ENCODE measurements at regions of chr15 and their contacts with region 1.

Region 1: DNA sequence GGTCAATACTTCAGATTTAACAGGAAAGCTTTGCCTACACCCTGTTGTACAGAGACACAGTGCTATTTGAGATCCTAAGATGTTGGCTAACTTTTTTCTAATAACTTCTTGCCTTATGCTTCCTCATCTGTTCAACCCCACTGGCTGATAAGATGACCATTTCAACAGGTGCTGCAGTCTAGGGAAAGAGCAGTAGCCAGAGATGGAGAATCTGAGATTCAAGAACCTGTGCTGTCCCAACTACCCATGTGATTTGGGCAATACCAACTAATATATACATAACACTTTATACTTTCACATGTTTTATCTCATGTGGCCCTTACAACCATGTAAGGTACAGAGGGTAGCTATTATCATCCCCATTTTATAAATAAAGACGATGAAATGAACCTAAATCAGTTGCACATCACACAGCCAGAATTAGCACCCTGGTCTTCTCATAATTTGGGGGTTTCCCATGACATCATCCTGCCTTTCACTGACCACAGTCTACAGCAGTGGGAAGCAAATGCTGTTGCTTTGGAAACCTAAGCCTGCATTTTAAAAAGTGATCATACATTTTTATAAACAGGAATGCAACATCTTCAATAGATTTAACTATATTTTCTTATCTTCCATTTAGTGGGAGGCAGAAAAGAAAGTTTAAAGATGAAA is 9.7 kb downstream of the TTC23 start:
- DNase-seq: no peak
- ATAC-seq: no peak
- H3K4me3 ChIP-seq: no peak overlapping the region
- H3K27ac ChIP-seq: no peak overlapping the region
- H3K4me1 ChIP-seq: no peaks in the 10 kb centered on the region
- H3K27me3 ChIP-seq: no peaks in the 10 kb centered on the region
- CTCF ChIP-seq: no peak
- EP300 ChIP-seq: no peak
- POLR2A ChIP-seq: no peak
- RAD21 ChIP-seq: no peak

Region 2: DNA sequence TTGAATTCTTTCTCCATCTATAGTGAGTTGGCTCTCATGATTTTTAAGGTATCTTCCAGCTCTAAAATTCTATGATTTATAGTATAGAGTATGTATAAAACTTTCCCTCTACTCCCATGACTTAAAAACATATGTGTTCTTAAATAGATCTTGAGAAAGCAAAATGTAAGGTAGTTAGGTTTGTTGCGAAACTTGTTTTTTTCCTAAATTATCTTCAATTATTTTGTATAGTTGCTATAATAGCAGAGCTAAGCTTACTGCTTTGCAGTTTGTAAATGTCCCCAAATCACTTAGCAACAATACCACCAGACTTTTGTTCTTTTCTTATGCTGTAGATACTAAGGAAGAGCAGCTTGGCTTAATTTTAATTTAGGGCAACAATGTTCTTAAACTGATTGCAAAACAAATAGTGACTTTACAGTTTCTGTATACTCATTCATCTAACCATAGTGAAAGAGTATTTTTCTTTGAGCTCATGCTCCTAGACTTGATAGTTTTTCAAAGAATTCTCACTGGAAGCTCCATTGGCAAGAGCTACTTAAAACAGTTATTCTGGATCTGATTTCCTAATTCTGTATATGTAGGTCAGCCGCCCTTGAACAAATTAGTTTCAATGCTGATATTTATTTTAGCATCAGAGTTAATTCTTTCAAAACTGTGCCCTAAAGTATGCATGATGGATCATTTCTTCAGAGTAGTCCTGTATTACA is 432.4 kb after region 1 on chr15:
- CTCF ChIA-PET with region 1: no interaction called
- POLR2A ChIA-PET with region 1: no interaction called
- in situ Hi-C with region 1: no loop called
- intact Hi-C with region 1: loop called (anchors 2 kb)
- DNase-seq: no peak
- ATAC-seq: no peak
- H3K4me3 ChIP-seq: no peak overlapping the region
- H3K27ac ChIP-seq: no peak overlapping the region
- H3K4me1 ChIP-seq: no peaks in the 10 kb centered on the region
- H3K27me3 ChIP-seq: no peaks in the 10 kb centered on the region
- CTCF ChIP-seq: no peak
- EP300 ChIP-seq: no peak
- POLR2A ChIP-seq: no peak
- RAD21 ChIP-seq: no peak

Measured in K562 (cell line).